SK-N-SH (cell line): ENCODE measurements at regions of chr12 and their contacts with region 1.

Region 1: DNA sequence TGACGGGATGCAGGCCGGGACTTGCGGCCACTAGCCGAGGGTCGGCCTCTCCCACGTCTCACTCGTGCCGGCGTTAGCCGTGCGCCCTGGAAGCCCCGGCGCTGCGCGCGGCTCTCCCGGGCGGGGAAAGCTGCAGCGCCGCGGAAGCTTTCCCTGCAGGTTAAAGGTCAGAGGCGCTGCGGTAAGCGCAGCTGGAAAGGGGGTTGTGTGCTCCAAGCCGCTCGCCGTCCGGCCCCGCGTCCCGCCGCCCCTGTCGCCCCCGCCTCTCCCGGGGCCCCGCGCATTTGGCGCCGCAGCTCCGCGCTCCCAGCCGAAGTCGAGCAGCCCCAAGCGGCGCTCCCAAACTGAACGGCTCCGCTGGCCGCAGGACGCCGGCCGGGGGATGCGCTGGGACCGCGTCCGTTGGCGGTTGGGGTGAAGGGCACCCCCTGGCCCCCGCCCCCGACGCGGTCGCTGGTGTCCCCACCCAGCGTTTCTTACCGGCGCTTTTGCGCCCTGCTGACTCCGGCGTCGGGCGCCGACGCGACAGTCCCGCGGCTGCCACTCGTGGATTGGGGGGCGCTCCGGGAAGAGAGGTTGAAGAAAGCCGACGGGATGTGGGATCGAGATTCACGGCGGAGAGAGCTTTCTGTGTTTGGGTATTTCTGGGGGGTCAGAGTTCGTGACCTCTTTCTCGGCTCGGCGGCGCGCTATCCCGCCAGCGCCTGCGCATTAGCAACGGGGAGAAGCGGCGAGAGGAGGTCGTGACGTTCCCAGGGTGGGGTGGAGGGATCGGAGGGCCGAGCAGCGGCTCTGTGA is at the start of gene NR2C1:
- DNase-seq: peak; percentile 98
- H3K4me3 ChIP-seq: peak within 1 kb of the TSS; percentile 77 to 94
- H3K27ac ChIP-seq: peak within 1 kb of the TSS; percentile 56 to 73; a peak in 3 of 4 replicates
- H3K4me1 ChIP-seq: no peaks in the 10 kb centered on the region
- H3K27me3 ChIP-seq: no peaks in the 10 kb centered on the region
- CTCF ChIP-seq: no peak
- EP300 ChIP-seq: no peak
- RAD21 ChIP-seq: no peak
- polyA plus RNA-seq, gene NR2C1: 15.9 and 19.1 TPM in 2 replicates

Region 2: DNA sequence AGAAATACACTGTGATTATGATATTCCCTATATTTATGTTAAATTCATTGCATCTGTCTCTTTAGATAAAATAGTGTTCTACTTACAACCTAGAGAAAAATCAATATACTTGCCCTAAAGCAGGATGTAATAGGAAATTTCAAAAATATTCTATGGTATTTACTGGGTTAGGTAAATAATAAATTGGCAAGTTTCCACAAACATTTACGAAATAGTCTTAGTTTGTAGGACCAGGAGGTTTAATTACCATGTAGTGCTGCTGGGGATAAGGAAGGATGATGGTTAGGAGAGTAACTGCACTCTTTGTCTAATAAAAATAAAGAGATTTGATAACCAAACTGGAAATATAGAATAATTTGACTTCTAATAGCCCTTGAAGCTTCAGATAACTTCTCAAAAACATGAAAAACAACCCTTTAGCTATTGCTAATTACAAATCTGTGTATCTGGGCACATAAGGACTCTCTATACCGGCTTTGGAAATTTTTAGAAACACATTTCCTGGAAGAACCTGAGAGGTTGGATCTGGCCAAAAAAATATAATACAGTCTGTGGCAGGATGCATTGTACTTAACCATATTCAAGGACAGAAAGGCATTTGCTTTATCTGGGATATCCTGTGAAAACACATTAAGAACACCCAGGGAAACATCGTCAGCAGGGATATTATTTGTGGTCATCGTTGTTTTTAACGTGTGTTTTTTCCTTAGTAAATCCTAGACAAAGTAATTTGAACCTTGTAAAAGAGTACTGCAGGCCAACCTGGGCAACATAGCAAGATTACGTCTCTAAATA is 386.1 kb before region 1 on chr12:
- CTCF ChIA-PET with region 1: no interaction called
- POLR2A ChIA-PET with region 1: no interaction called
- DNase-seq: no peak
- H3K4me3 ChIP-seq: no peak overlapping the region
- H3K27ac ChIP-seq: no peak overlapping the region
- H3K4me1 ChIP-seq: no peaks in the 10 kb centered on the region
- H3K27me3 ChIP-seq: no peaks in the 10 kb centered on the region
- CTCF ChIP-seq: no peak
- EP300 ChIP-seq: no peak
- RAD21 ChIP-seq: no peak

Region 3: GRCh38 chr12:95037906-95038305 is 35.2 kb before region 1 on chr12:
- CTCF ChIA-PET with region 1: interaction called, 11 read pairs
- POLR2A ChIA-PET with region 1: no interaction called
- DNase-seq: no peak
- H3K4me3 ChIP-seq: no peak overlapping the region
- H3K27ac ChIP-seq: no peak overlapping the region
- H3K4me1 ChIP-seq: no peaks in the 10 kb centered on the region; a peak in 1 of 4 replicates
- H3K27me3 ChIP-seq: no peaks in the 10 kb centered on the region
- CTCF ChIP-seq: no peak
- EP300 ChIP-seq: no peak
- RAD21 ChIP-seq: no peak

Region 4: GRCh38 chr12:95083938-95084337 is 10.8 kb after region 1 on chr12:
- CTCF ChIA-PET with region 1: interaction called, 12 read pairs
- POLR2A ChIA-PET with region 1: no interaction called
- DNase-seq: no peak
- H3K4me3 ChIP-seq: no peak overlapping the region
- H3K27ac ChIP-seq: peak overlapping the region; percentile 12 to 34; a peak in 2 of 4 replicates
- H3K4me1 ChIP-seq: no peaks in the 10 kb centered on the region; a peak in 1 of 4 replicates
- H3K27me3 ChIP-seq: no peaks in the 10 kb centered on the region
- CTCF ChIP-seq: no peak
- EP300 ChIP-seq: no peak
- RAD21 ChIP-seq: no peak

Region 5: DNA sequence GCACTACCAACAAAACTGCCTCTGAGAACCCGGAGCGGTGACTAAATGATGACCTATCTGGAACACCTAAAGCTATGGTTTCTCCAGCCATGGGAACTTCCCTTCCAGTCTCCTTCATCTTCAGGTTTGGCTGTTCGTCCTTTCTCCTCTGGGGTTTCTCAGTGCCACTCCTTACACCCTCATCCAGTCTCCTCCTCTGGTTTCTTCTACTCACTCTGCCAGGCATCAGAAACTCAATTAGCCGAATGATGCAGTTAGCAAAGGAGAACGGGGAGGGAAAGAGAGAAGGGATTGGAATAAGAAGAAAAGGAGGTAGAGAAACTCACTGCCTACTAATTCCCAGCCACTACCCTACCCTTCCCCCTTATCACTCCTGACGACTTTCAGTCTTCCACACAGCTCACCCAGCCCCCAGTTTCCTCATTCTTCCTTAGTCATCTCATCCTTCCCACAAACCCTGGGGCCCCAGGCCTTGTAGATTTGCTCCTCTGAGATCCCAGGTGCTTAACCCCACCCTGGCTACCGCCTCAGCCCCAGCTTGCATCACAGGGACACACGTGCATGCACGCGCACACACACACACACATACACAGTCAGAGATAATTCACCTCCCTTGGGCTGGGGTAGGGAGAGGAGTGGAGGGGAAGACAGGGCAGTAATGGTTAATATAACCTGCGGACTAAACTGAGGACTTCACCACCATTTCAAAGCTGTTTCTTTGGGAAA is 131.2 kb after region 1 on chr12:
- CTCF ChIA-PET with region 1: no interaction called
- POLR2A ChIA-PET with region 1: no interaction called
- DNase-seq: no peak
- H3K4me3 ChIP-seq: 0 out of 4 replicates have a peak overlapping the region, but pooled peaks of 1 of the 2 experiments have one; percentile 1
- H3K27ac ChIP-seq: peak overlapping the region; percentile 74 to 87
- H3K4me1 ChIP-seq: peaks cover 13 to 60% of the 10 kb centered on the region in 2 experiments
- H3K27me3 ChIP-seq: no peaks in the 10 kb centered on the region
- CTCF ChIP-seq: no peak
- EP300 ChIP-seq: peak in 1 of 2 experiments; percentile 49; a peak in 1 of 4 replicates
- RAD21 ChIP-seq: no peak

Region 6: DNA sequence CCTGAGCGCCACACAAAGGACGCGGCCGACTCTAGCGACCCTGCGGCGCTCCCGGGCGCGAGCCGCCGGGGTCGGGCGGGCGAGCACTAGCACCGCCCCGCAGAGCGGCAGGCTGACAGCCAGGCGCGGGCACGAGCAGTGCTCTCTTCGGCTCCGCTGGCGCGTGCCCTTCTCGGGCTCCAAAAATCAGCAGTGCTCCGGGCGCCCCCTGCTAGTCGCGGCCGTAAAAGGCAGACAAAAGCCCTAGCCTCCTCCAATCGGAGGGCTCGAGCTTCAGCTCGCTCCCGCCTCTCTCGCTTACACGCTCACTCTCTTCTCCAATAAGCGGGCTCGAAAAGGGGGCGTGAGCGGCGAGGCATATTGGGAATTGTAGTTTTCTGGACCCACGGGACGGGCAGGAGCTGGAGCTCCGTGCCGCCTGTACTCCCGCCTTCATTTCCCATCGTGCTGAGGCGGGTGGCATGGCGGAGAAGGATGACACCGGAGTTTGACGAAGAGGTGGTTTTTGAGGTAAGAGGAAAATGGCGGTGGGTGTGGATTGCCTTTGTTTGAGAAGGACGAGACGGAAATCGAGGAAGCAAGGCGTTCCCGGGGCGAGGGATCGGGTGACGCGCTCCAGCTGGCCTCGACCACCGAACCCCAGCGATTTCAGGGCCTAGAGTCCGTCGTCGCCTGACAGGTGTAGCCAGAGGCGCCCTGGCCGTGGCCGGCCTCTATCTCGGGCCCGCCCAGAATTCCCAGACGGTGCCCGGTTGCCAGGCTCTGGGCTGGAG is 144.5 kb after region 1 on chr12 and contains the starts of genes FGD6 and VEZT:
- CTCF ChIA-PET with region 1: interaction called, 6 read pairs
- POLR2A ChIA-PET with region 1: interaction called, 14 read pairs
- DNase-seq: peak; percentile 94
- H3K4me3 ChIP-seq: peak within 1 kb of the TSS; percentile 93 to 97
- H3K27ac ChIP-seq: peak within 1 kb of the TSS; percentile 95 to 99
- H3K4me1 ChIP-seq: peaks cover 14 to 28% of the 10 kb centered on the region in 2 experiments; a peak in 3 of 4 replicates
- H3K27me3 ChIP-seq: no peaks in the 10 kb centered on the region
- CTCF ChIP-seq: peak; percentile 62
- EP300 ChIP-seq: no peak
- RAD21 ChIP-seq: peak; percentile 75
- polyA plus RNA-seq, gene FGD6: 2.8 and 3.8 TPM in 2 replicates
- polyA plus RNA-seq, gene VEZT: 41.2 and 55.0 TPM in 2 replicates